ENCODE measurements at regions of chr6 and their contacts with region 1.

Region 1: GRCh38 chr6:30102970-30103874 is 9.7 kb downstream of the TRIM31 start:
- DNase-seq: peak; percentile 90
- ATAC-seq: peak; percentile 79
- H3K4me3 Mint-ChIP-seq: peak overlapping the region; percentile 73
- H3K27ac Mint-ChIP-seq: peak overlapping the region; percentile 65
- H3K4me1 Mint-ChIP-seq: peaks cover 36% of the 10 kb centered on the region
- H3K27me3 Mint-ChIP-seq: peaks cover 47% of the 10 kb centered on the region

Region 2: GRCh38 chr6:30061092-30061857 is 41.9 kb before region 1 on chr6 and contains the start of gene POLR1H:
- CTCF ChIA-PET with region 1: interaction called, 21 read pairs
- POLR2A ChIA-PET with region 1: interaction called, 4 read pairs
- intact Hi-C with region 1: loop called (anchors 1 to 5 kb)
- DNase-seq: peak; percentile 92
- ATAC-seq: peak; percentile 88
- H3K4me3 Mint-ChIP-seq: peak within 1 kb of the TSS; percentile 94
- H3K27ac Mint-ChIP-seq: peak within 1 kb of the TSS; percentile 98
- H3K4me1 Mint-ChIP-seq: peaks cover 43% of the 10 kb centered on the region
- H3K27me3 Mint-ChIP-seq: no peaks in the 10 kb centered on the region
- total RNA-seq, gene POLR1H: 38.2 to 65.0 TPM

Region 3: DNA sequence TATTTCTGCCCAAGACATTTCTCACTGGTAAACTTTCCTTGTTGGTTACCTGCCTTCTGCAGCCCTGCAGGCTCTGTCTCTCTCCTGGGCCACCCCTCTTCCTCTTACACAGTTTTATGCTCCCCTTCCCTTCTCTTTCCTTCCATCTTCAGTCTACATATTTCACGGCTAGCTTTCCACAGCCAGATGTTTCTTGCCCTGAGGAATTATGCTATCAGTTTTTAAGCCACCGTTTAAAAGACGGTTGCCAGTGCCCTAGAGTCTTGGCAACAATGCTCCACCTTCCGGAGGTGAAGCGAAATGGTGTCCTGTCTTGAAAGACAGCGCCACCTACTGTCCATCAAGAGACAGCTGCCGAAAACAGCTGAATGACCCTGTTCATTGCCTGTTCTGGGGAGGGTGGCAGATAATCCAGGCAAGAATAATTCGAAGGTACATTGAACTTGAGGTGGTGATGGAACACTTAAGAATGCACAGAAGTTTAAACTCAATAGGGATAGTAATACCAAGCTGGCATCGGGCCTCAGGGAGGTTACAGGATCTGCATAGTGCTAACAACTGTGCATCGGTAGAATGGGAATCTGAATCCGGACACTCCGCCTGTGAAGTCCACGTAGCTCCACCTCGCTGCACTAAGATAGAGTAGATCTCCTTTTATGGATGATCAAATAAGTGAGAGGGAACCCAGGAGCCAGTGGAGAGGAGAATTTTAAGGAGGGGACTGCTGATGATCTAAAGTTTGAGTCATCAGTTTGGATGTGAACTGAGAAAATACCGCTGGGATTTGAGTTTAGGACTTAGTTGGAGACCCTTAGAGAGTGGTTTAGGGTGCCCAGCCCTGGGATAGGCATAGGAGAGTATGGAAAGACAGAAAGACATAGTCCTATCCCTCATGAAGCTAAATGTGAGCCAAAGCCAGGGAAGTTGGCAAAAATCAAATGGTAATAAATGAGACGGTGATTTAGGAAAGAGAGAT is 28.0 kb after region 1 on chr6:
- CTCF ChIA-PET with region 1: interaction called, 244 read pairs
- POLR2A ChIA-PET with region 1: interaction called, 3 read pairs
- intact Hi-C with region 1: loop called (anchors 1 kb)
- DNase-seq: peak; percentile 79
- ATAC-seq: peak; percentile 90
- H3K4me3 Mint-ChIP-seq: no peak overlapping the region
- H3K27ac Mint-ChIP-seq: no peak overlapping the region
- H3K4me1 Mint-ChIP-seq: peaks cover 27% of the 10 kb centered on the region
- H3K27me3 Mint-ChIP-seq: peaks cover 62% of the 10 kb centered on the region

Region 4: GRCh38 chr6:30163090-30163917 is 60.1 kb after region 1 on chr6 and contains the start of gene TRIM15:
- CTCF ChIA-PET with region 1: interaction called, 40 read pairs
- POLR2A ChIA-PET with region 1: no interaction called
- intact Hi-C with region 1: no loop called
- DNase-seq: peak; percentile 80
- ATAC-seq: peak; percentile 45
- H3K4me3 Mint-ChIP-seq: no peak within 1 kb of the TSS
- H3K27ac Mint-ChIP-seq: peak within 1 kb of the TSS; percentile 52
- H3K4me1 Mint-ChIP-seq: peaks cover 33% of the 10 kb centered on the region
- H3K27me3 Mint-ChIP-seq: peaks cover 11% of the 10 kb centered on the region
- total RNA-seq, gene TRIM15: 0.18 to 0.26 TPM

Region 5: DNA sequence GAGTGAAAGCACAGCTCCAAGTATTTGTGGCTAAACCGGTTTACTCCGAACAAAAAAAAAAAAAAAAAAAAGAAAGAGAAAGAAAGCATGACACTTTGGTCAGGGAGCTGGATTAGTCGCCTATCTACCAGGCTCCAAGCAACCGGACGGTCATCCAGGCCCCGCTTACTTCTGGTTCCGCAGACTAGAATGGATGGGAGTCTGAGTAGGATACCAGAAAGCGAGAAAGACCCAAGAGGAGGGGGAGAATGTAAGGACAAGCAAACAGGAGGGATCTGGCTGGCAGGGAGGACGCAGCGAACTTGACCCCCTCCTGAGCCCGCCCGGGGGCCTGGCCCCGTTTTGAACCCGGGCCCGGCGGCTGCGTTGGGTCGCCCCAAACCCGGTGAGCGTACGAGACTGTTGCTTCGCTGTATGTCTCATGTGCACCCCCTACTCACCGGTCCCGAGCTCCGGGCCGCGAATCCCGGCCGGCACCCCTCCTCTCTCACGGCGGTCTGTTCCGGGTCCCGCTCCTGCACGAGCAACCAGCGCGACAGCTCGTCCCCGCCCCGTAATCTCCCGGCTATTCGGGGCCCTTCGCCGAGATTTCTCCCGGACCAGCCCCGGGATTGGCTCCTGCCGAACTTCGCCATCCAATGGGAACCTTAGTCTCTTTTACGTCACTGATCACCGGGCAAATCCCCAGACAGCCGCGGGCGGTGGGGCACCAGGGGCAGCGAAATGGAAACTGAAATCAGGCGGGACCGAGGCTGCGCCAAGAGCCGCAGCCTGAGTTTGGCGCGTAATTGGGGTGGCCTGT is 109.8 kb after region 1 on chr6 and contains the start of gene TRIM26:
- CTCF ChIA-PET with region 1: interaction called, 3 read pairs
- POLR2A ChIA-PET with region 1: no interaction called
- intact Hi-C with region 1: loop called in 1 of 2 experiments (anchors 1 kb)
- DNase-seq: peak; percentile 98
- ATAC-seq: peak; percentile 90
- H3K4me3 Mint-ChIP-seq: peak within 1 kb of the TSS; percentile 89
- H3K27ac Mint-ChIP-seq: peak within 1 kb of the TSS; percentile 99
- H3K4me1 Mint-ChIP-seq: peaks cover 50% of the 10 kb centered on the region
- H3K27me3 Mint-ChIP-seq: no peaks in the 10 kb centered on the region
- total RNA-seq, gene TRIM26: 48.4 to 60.4 TPM